ENCODE measurements at regions of chr5 and their contacts with region 1.

Region 1: DNA sequence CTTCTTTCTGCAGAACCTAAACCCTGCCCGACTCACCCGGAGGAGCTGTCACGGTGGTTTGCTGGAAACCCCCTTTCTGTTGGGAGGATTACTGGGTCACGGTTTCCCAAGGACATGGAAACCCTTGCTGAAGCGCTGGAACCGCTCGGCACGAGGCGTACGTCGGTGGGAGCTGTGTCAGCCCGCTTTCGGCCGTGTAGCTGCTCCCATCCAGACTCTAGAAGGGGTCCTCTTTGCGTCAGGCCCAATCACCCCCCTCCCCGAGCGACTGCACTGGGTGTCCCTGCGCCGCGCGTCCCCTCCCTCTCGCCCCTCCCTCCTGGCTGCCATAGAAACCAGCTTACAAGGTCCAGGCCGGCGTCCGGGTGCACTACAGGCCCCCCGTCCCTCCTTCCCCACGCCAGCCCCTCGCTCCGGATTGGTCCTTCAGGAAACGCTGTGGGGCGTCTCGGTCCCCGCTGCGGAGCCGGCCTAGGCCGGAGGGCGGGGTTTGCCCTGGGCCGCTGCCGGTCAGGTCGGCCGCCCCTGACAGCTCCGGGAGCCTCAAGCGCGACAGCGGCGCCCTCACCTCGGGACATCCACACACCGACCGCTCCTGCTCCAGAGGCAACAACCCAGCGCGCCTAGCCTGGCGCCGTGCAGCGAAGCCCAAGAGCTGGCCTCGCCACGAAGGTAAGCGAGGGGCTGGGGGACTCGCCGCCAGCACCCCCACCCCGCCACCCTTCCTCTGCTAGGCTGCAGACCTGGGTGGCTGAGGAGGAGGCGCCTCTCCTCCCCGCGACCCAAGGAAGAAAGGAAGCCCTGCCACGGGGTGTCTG is at the start of gene NIM1K:
- DNase-seq: peak; percentile 30 to 53
- ATAC-seq: peak; percentile 61 to 70 (median 69)
- H3K4me3 ChIP-seq: peak within 1 kb of the TSS; percentile 24
- H3K4me3 Mint-ChIP-seq: peak within 1 kb of the TSS; percentile 83
- H3K27ac ChIP-seq: no peak within 1 kb of the TSS
- H3K27ac Mint-ChIP-seq: peak within 1 kb of the TSS; percentile 0 to 72
- H3K4me1 ChIP-seq: peaks cover 20% of the 10 kb centered on the region
- H3K4me1 Mint-ChIP-seq: peaks cover 26 to 34% of the 10 kb centered on the region in 2 donors
- H3K27me3 ChIP-seq: peaks cover 3% of the 10 kb centered on the region
- H3K27me3 Mint-ChIP-seq: peaks cover 0 to 15% of the 10 kb centered on the region in 2 donors
- CTCF ChIP-seq: no peak
- total RNA-seq, gene NIM1K: 0.28 to 0.40 (median 0.36) TPM

Region 2: GRCh38 chr5:42555797-42556196 is 636.2 kb before region 1 on chr5:
- intact Hi-C with region 1: no loop called
- DNase-seq: no peak
- ATAC-seq: no peak
- H3K4me3 ChIP-seq: no peak overlapping the region
- H3K4me3 Mint-ChIP-seq: no peak overlapping the region
- H3K27ac ChIP-seq: no peak overlapping the region
- H3K27ac Mint-ChIP-seq: no peak overlapping the region
- H3K4me1 ChIP-seq: no peaks in the 10 kb centered on the region
- H3K4me1 Mint-ChIP-seq: no peaks in the 10 kb centered on the region
- H3K27me3 ChIP-seq: no peaks in the 10 kb centered on the region
- H3K27me3 Mint-ChIP-seq: peaks cover 2 to 3% of the 10 kb centered on the region in 2 donors
- CTCF ChIP-seq: no peak

Region 3: DNA sequence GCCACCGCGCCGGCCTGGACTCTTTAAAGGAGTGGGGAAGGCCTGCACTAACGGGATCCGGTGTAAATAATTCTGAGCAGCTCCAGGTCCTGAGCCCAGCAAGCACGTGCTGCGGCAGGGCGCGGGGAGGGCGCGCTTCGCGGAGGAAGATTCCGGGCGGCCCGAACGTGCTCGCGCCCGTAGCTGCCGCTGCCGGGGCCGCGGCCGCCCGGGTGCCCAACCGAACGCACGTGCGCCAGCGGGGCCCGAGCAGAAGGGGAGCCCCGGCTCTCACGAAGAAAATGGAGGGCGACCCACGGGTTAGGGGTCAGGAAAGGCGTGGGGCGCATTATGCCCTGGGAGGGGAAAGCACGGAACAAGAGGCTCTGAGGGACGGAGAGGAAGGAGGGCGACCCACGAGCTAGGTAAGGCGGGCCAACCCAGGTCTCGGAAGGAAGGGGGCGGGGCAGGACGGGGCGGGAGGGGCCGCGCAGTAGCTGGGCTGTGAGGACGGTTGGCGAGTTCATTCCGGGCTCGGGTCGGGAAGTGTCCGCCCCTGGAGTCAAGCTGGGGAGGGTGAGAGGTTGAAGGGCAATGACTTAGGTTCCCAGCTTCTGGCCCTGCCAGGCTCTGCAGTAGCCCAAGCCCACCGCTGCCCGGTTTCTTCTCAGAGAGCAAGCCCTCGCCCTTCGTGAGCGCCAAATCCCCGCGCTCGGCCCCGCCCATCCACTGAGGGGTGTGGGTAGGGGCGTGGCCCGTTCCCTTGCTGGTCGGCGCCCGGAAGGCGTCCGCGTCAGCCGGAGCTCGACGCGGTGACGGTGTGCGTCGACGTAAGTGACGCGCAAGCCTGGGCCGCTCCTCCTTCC is 71.0 kb before region 1 on chr5 and contains the start of gene ZNF131:
- intact Hi-C with region 1: loop called (anchors 2 kb)
- DNase-seq: peak; percentile 99
- ATAC-seq: peak; percentile 87 to 96 (median 89)
- H3K4me3 ChIP-seq: peak within 1 kb of the TSS; percentile 59
- H3K4me3 Mint-ChIP-seq: peak within 1 kb of the TSS; percentile 87
- H3K27ac ChIP-seq: peak within 1 kb of the TSS; percentile 88
- H3K27ac Mint-ChIP-seq: peak within 1 kb of the TSS; percentile 88 to 99
- H3K4me1 ChIP-seq: peaks cover 13% of the 10 kb centered on the region
- H3K4me1 Mint-ChIP-seq: peaks cover 26 to 29% of the 10 kb centered on the region in 2 donors
- H3K27me3 ChIP-seq: no peaks in the 10 kb centered on the region
- H3K27me3 Mint-ChIP-seq: no peaks in the 10 kb centered on the region
- CTCF ChIP-seq: no peak
- total RNA-seq, gene ZNF131: 69.0 to 84.0 (median 83.5) TPM

Measured in natural killer cell (primary cell).